ENCODE measurements at regions of chr3 and their contacts with region 1.

Region 1: GRCh38 chr3:99686955-99687612 is 48.7 kb downstream of the COL8A1 start:
- DNase-seq: peak; percentile 72
- H3K4me3 ChIP-seq: no peak overlapping the region
- H3K27ac ChIP-seq: no peak overlapping the region
- H3K4me1 ChIP-seq: peaks cover 0 to 20% (median 13%) of the 10 kb centered on the region in 4 donors
- H3K27me3 ChIP-seq: no peaks in the 10 kb centered on the region
- CTCF ChIP-seq: peak; percentile 44 to 74 (median 66)
- EP300 ChIP-seq: no peak
- POLR2A ChIP-seq: no peak

Region 2: GRCh38 chr3:99023590-99024192 is 663.4 kb before region 1 on chr3:
- intact Hi-C with region 1: loop called (anchors 10 kb)
- DNase-seq: no peak
- H3K4me3 ChIP-seq: no peak overlapping the region
- H3K27ac ChIP-seq: no peak overlapping the region
- H3K4me1 ChIP-seq: no peaks in the 10 kb centered on the region
- H3K27me3 ChIP-seq: no peaks in the 10 kb centered on the region
- CTCF ChIP-seq: peak; percentile 49 to 69 (median 59)
- EP300 ChIP-seq: no peak
- POLR2A ChIP-seq: no peak

Region 3: GRCh38 chr3:99499235-99500158 is 187.6 kb before region 1 on chr3:
- intact Hi-C with region 1: loop called (anchors 5 kb)
- DNase-seq: no peak
- H3K4me3 ChIP-seq: no peak overlapping the region
- H3K27ac ChIP-seq: no peak overlapping the region
- H3K4me1 ChIP-seq: peaks cover 0 to 35% (median 27%) of the 10 kb centered on the region in 4 donors
- H3K27me3 ChIP-seq: no peaks in the 10 kb centered on the region
- CTCF ChIP-seq: peak in 3 of 4 experiments; percentile 33 to 62 (median 56)
- EP300 ChIP-seq: no peak
- POLR2A ChIP-seq: no peak

Region 4: DNA sequence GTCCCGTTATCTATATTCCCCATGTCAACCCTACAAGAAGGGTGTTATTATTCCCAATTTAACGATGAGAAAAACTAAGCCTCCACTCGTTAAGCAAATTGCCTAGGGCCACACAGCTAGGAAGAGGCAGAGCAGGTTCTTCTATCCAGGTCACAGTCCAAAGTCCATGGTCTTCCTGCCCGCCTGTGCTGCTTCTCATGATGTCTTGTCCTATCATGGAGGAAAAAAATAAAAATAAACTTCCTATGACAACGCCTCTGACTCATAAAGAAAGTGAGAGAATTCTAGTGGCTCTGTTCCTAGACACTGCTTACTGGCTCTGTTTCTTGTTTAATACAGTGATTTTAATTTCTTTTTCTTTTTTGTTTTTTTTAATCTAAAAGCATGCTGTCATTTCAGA is 39.0 kb before region 1 on chr3:
- intact Hi-C with region 1: loop called (anchors 2 kb)
- DNase-seq: no peak
- H3K4me3 ChIP-seq: no peak overlapping the region
- H3K27ac ChIP-seq: peak overlapping the region; percentile 67 to 91 (median 84)
- H3K4me1 ChIP-seq: peaks cover 0 to 89% (median 67%) of the 10 kb centered on the region in 4 donors
- H3K27me3 ChIP-seq: no peaks in the 10 kb centered on the region
- CTCF ChIP-seq: no peak
- EP300 ChIP-seq: no peak
- POLR2A ChIP-seq: no peak

Measured in sigmoid colon (tissue), 7 donors.